ENCODE measurements at regions of chr12 and their contacts with region 1.

Region 1: GRCh38 chr12:84822525-84822924 is 90.1 kb downstream of the SLC6A15 start:
- DNase-seq: no peak
- CTCF ChIP-seq: no peak

Region 2: DNA sequence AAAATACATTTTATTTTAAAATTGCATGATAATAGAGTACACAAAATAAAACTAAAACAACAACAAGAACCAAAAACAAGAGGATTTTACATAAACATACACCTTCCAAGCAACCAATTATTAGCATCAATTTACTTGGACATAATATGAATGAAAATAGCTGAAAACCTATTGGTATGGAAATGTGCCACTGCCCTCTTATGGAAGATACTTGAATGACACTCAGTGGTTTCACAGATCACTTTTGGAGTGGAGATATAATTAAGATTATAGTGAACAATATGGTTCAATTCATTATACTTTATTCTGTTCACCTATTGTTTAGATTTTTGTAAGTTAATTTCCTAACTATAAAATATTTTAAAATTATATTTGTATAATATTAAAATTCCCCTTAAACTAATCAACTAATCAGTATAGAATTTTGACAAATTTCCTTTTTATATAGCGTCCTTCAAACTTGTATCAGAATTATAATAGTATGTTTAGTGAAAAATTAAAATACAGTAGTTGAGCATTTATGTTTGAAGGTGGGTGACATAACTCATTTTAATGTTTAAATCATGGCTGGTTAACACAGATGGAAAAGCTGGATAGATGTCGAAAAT is 20.0 kb after region 1 on chr12:
- CTCF ChIA-PET with region 1: interaction called, 11 read pairs
- POLR2A ChIA-PET with region 1: no interaction called
- DNase-seq: peak; percentile 19
- CTCF ChIP-seq: peak; percentile 51

Region 3: GRCh38 chr12:85280165-85280983 is 457.8 kb after region 1 on chr12 and contains the start of gene ALX1:
- CTCF ChIA-PET with region 1: no interaction called
- POLR2A ChIA-PET with region 1: no interaction called
- DNase-seq: peak; percentile 13
- CTCF ChIP-seq: no peak

Measured in GM10248 (cell line).